ENCODE measurements at regions of chr1 and their contacts with region 1.

Region 1: GRCh38 chr1:92298573-92299476 is at the starts of genes GLMN and RPAP2:
- DNase-seq: peak; percentile 69 to 79 (median 75)
- H3K4me3 ChIP-seq: peak within 1 kb of the TSS; percentile 75 to 87
- H3K4me3 Mint-ChIP-seq: peak within 1 kb of the TSS; percentile 95 to 99 (median 98)
- H3K27ac ChIP-seq: peak within 1 kb of the TSS; percentile 88
- H3K27ac Mint-ChIP-seq: peak within 1 kb of the TSS; percentile 87 to 99 (median 98)
- H3K4me1 ChIP-seq: peaks cover 29% of the 10 kb centered on the region
- H3K4me1 Mint-ChIP-seq: peaks cover 23 to 51% (median 26%) of the 10 kb centered on the region in 4 donors
- H3K27me3 ChIP-seq: no peaks in the 10 kb centered on the region
- H3K27me3 Mint-ChIP-seq: no peaks in the 10 kb centered on the region
- total RNA-seq, gene GLMN: 13.9 to 14.7 TPM
- total RNA-seq, gene RPAP2: 39.0 to 44.0 TPM

Region 2: DNA sequence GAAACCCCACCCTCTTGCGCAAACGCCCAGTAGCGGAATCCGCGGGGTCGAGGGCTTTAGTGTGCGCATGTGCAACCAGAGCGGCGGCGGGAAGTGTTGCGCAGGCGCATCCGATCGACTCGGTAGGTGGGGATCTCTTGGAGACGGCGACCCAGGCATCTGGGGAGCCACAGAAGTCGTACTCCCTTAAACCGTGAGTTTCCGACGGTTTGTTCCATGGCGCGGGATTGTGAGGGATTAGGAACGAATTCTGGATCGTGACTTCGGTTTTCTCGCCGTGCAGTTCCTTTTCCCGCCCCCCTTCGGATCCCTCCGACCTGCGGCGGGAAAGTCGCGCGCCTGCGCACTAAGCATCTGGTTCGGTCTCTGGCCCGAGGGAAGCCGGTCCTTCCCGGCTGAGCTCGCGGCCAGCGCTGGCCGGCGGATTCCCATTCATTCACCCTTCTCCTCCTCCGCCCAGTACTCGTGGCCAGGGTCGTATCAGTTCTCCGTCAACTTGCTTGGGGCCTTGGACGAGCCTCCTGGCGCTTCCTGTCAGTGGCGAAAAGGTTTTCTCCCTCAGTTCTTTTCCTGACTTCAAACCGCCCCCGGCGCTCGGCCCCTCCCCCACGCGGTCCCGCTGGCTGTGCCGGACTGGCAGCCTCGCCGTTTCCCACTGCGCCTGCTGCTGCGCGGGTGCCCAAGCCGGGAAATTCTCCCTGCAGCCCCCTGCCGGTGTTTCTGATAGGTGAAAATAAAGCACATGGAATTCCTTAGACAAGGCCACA is 797.9 kb before region 1 on chr1 and contains the start of gene CDC7:
- CTCF ChIA-PET with region 1: no interaction called
- POLR2A ChIA-PET with region 1: no interaction called
- intact Hi-C with region 1: loop called (anchors 5 kb)
- DNase-seq: peak; percentile 69 to 87 (median 81)
- H3K4me3 ChIP-seq: peak within 1 kb of the TSS; percentile 62 to 81
- H3K4me3 Mint-ChIP-seq: no peak within 1 kb of the TSS
- H3K27ac ChIP-seq: peak within 1 kb of the TSS; percentile 75
- H3K27ac Mint-ChIP-seq: no peak within 1 kb of the TSS
- H3K4me1 ChIP-seq: peaks cover 31% of the 10 kb centered on the region
- H3K4me1 Mint-ChIP-seq: peaks cover 18 to 25% (median 21%) of the 10 kb centered on the region in 4 donors
- H3K27me3 ChIP-seq: no peaks in the 10 kb centered on the region
- H3K27me3 Mint-ChIP-seq: no peaks in the 10 kb centered on the region
- total RNA-seq, gene CDC7: 4.7 to 6.0 TPM

Region 3: GRCh38 chr1:92080128-92080985 is 218.5 kb before region 1 on chr1 and contains the start of gene BTBD8:
- CTCF ChIA-PET with region 1: no interaction called
- POLR2A ChIA-PET with region 1: no interaction called
- intact Hi-C with region 1: loop called (anchors 5 kb)
- DNase-seq: peak; percentile 83 to 89 (median 84)
- H3K4me3 ChIP-seq: peak within 1 kb of the TSS; percentile 68 to 89
- H3K4me3 Mint-ChIP-seq: peak within 1 kb of the TSS; percentile 92 to 99 (median 98)
- H3K27ac ChIP-seq: peak within 1 kb of the TSS; percentile 60
- H3K27ac Mint-ChIP-seq: peak within 1 kb of the TSS; percentile 42 to 96 (median 91)
- H3K4me1 ChIP-seq: peaks cover 7% of the 10 kb centered on the region
- H3K4me1 Mint-ChIP-seq: peaks cover 13 to 43% (median 18%) of the 10 kb centered on the region in 4 donors
- H3K27me3 ChIP-seq: no peaks in the 10 kb centered on the region
- H3K27me3 Mint-ChIP-seq: no peaks in the 10 kb centered on the region
- total RNA-seq, gene BTBD8: 6.0 to 7.5 TPM

Region 4: GRCh38 chr1:92317836-92318493 is 19.1 kb after region 1 on chr1:
- CTCF ChIA-PET with region 1: interaction called, 19 read pairs
- POLR2A ChIA-PET with region 1: interaction called, 11 read pairs
- intact Hi-C with region 1: no loop called
- DNase-seq: peak; percentile 27 to 56 (median 40)
- H3K4me3 ChIP-seq: no peak overlapping the region
- H3K4me3 Mint-ChIP-seq: peak overlapping the region; percentile 55 to 79 (median 62)
- H3K27ac ChIP-seq: peak overlapping the region; percentile 36
- H3K27ac Mint-ChIP-seq: peak overlapping the region; percentile 59 to 94 (median 90)
- H3K4me1 ChIP-seq: peaks cover 63% of the 10 kb centered on the region
- H3K4me1 Mint-ChIP-seq: peaks cover 39 to 61% (median 48%) of the 10 kb centered on the region in 4 donors
- H3K27me3 ChIP-seq: no peaks in the 10 kb centered on the region
- H3K27me3 Mint-ChIP-seq: no peaks in the 10 kb centered on the region

Region 5: DNA sequence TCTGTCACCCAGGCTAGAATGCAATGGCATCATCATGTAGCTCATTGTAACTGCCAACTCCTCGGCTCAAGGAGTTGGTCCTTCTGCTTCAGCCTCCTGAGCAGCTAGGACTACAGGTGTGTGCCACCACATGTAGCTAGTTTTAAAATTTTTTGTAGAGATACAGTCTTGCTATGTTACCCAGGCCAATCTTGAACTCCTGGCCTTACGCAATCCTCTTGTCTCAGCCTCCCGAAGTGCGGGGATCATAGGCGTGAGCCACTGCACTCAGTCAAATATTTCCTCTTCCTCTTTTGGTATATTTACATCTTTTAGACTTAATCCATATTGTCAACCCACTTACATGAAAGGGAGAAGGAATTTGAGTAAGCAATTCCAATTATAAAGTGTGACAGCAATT is 364.9 kb after region 1 on chr1:
- CTCF ChIA-PET with region 1: no interaction called
- POLR2A ChIA-PET with region 1: no interaction called
- intact Hi-C with region 1: no loop called
- DNase-seq: no peak
- H3K4me3 ChIP-seq: no peak overlapping the region
- H3K4me3 Mint-ChIP-seq: no peak overlapping the region
- H3K27ac ChIP-seq: no peak overlapping the region
- H3K27ac Mint-ChIP-seq: no peak overlapping the region
- H3K4me1 ChIP-seq: no peaks in the 10 kb centered on the region
- H3K4me1 Mint-ChIP-seq: no peaks in the 10 kb centered on the region
- H3K27me3 ChIP-seq: no peaks in the 10 kb centered on the region
- H3K27me3 Mint-ChIP-seq: no peaks in the 10 kb centered on the region

Measured in CD4-positive, alpha-beta memory T cell (primary cell).